Mammary epithelial cell (primary cell): ENCODE measurements at regions of chr12 and their contacts with region 1.

Region 1: DNA sequence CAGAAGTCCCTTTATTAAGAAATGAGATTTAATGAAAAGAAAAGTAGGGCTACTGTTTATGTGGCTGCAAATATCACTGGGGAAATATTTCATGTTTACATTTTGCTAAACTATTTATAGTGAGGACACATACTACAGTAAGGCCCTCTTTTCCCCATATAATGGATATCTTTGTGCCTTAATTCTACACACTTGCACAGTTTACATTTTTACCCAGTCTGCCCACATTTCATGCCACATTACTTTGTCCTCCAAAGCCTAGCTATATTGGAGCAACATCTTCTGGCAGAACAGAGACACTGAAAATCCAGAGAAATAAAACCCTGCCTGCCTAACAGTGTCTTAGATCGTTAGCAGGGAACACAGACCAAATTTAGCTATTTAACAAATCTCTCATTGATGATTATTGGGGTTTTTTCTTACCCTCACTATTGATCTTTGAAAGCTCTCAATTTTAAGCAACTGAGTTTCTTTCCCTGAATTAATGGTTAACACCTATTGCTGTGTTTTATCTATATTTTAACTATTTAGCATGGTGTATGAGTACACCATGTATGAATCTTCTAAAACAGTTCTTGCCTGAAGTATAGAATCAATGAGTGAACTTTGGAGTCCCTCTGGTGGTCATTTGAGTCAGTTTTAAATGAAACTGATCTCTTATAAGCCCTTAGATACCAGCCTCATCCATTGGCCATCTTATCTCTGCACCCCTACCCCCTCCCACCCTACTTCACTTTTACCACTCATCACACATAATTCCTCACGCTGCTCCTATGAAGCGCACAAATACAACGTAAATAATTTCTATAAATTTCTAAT is 170.2 kb downstream of the BCAT1 start:
- DNase-seq: peak; percentile 28
- H3K4me3 ChIP-seq: no peak overlapping the region
- H3K27ac ChIP-seq: no peak overlapping the region
- H3K4me1 ChIP-seq: no peaks in the 10 kb centered on the region
- H3K27me3 ChIP-seq: no peaks in the 10 kb centered on the region
- CTCF ChIP-seq: peak; percentile 41 to 48

Region 2: DNA sequence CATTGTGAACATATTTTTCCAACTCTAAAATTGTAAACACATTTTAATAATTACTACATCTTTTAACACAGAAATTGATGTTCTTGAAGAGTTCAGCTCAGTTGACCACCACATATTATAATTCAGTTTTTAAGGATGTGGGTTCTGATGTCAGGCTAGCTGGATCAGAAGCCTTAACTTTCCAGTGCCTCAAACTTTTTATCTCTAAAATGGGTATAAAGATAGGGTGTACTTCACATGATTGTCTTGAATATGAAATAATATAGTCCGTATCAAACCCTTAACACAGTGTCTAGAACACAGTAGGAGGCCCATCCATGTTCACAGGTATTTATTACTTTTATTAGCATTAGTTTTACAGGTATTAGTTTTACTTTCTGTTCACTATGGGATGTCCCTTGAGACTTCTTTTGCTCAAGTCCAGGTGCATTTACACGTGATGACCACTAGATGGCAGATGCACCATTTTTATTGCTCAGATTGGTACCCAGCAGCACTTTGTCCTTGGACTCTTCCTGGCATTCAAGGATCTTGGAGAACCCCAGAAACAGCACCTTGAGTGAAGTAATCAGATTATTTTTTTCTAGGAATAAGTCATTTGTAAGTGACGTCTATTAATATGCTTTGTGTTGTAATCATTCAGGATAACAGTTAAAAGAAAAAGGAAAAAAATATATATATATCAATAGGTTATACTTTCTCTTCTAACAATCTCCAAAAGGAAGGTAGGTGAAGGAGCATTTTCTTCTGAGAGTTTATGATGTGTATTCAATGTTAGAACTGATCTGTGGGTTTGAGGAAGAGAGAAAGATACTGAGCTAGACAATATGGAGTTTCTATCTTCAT is 1573.5 kb before region 1 on chr12:
- CTCF ChIA-PET with region 1: interaction called, 3 read pairs
- dilution Hi-C with region 1: no loop called
- in situ Hi-C with region 1: no loop called
- intact Hi-C with region 1: loop called (anchors 2 kb)
- DNase-seq: peak; percentile 37
- H3K4me3 ChIP-seq: no peak overlapping the region
- H3K27ac ChIP-seq: no peak overlapping the region
- H3K4me1 ChIP-seq: no peaks in the 10 kb centered on the region
- H3K27me3 ChIP-seq: no peaks in the 10 kb centered on the region
- CTCF ChIP-seq: peak; percentile 84 to 94

Region 3: GRCh38 chr12:24109381-24110039 is 669.2 kb before region 1 on chr12:
- CTCF ChIA-PET with region 1: no interaction called
- dilution Hi-C with region 1: no loop called
- in situ Hi-C with region 1: no loop called
- intact Hi-C with region 1: loop called (anchors 5 kb)
- DNase-seq: peak; percentile 7
- H3K4me3 ChIP-seq: no peak overlapping the region
- H3K27ac ChIP-seq: no peak overlapping the region
- H3K4me1 ChIP-seq: no peaks in the 10 kb centered on the region
- H3K27me3 ChIP-seq: no peaks in the 10 kb centered on the region
- CTCF ChIP-seq: peak; percentile 51 to 59

Region 4: GRCh38 chr12:24155042-24155441 is 623.7 kb before region 1 on chr12:
- CTCF ChIA-PET with region 1: no interaction called
- dilution Hi-C with region 1: no loop called
- in situ Hi-C with region 1: no loop called
- intact Hi-C with region 1: no loop called
- DNase-seq: no peak
- H3K4me3 ChIP-seq: no peak overlapping the region
- H3K27ac ChIP-seq: no peak overlapping the region
- H3K4me1 ChIP-seq: no peaks in the 10 kb centered on the region
- H3K27me3 ChIP-seq: no peaks in the 10 kb centered on the region
- CTCF ChIP-seq: no peak

Region 5: DNA sequence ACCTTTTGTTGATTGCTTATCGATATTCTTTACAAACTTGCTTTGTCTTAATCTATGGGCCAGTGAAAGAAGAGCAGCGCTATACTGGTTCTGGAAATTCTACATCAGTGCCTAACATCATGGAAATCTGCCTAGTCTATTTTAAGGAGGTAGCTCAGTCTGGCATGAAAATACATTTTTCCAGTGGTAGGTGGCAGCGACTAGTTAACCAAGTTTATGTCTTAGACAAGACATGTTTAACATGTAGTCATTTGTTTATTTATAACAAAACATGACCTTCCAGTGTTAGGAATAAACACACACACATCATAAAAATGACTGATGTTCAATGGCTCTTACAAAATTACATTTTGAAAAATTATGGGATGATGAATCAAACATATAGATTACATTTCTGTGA is 493.2 kb before region 1 on chr12:
- CTCF ChIA-PET with region 1: no interaction called
- dilution Hi-C with region 1: no loop called
- in situ Hi-C with region 1: no loop called
- intact Hi-C with region 1: loop called (anchors 5 kb)
- DNase-seq: no peak
- H3K4me3 ChIP-seq: no peak overlapping the region
- H3K27ac ChIP-seq: no peak overlapping the region
- H3K4me1 ChIP-seq: no peaks in the 10 kb centered on the region
- H3K27me3 ChIP-seq: no peaks in the 10 kb centered on the region
- CTCF ChIP-seq: no peak

Region 6: GRCh38 chr12:24584032-24584675 is 194.5 kb before region 1 on chr12:
- CTCF ChIA-PET with region 1: no interaction called
- dilution Hi-C with region 1: no loop called
- in situ Hi-C with region 1: no loop called
- intact Hi-C with region 1: no loop called
- DNase-seq: no peak
- H3K4me3 ChIP-seq: no peak overlapping the region
- H3K27ac ChIP-seq: no peak overlapping the region
- H3K4me1 ChIP-seq: no peaks in the 10 kb centered on the region
- H3K27me3 ChIP-seq: no peaks in the 10 kb centered on the region
- CTCF ChIP-seq: no peak

Region 7: GRCh38 chr12:24596768-24597388 is 181.8 kb before region 1 on chr12:
- CTCF ChIA-PET with region 1: no interaction called
- dilution Hi-C with region 1: no loop called
- in situ Hi-C with region 1: no loop called
- intact Hi-C with region 1: loop called (anchors 2 kb)
- DNase-seq: peak; percentile 20
- H3K4me3 ChIP-seq: no peak overlapping the region
- H3K27ac ChIP-seq: no peak overlapping the region
- H3K4me1 ChIP-seq: peaks cover 6% of the 10 kb centered on the region
- H3K27me3 ChIP-seq: no peaks in the 10 kb centered on the region
- CTCF ChIP-seq: peak; percentile 66 to 70

Region 8: GRCh38 chr12:24728366-24728765 is 50.3 kb before region 1 on chr12:
- CTCF ChIA-PET with region 1: no interaction called
- dilution Hi-C with region 1: no loop called
- in situ Hi-C with region 1: no loop called
- intact Hi-C with region 1: loop called (anchors 2 kb)
- DNase-seq: peak; percentile 14
- H3K4me3 ChIP-seq: no peak overlapping the region
- H3K27ac ChIP-seq: no peak overlapping the region
- H3K4me1 ChIP-seq: no peaks in the 10 kb centered on the region
- H3K27me3 ChIP-seq: no peaks in the 10 kb centered on the region
- CTCF ChIP-seq: peak; percentile 47 to 59

Region 9: GRCh38 chr12:24838531-24838950 is 59.8 kb after region 1 on chr12:
- CTCF ChIA-PET with region 1: interaction called, 5 read pairs
- dilution Hi-C with region 1: no loop called
- in situ Hi-C with region 1: no loop called
- intact Hi-C with region 1: loop called (anchors 1 kb)
- DNase-seq: peak; percentile 35
- H3K4me3 ChIP-seq: no peak overlapping the region
- H3K27ac ChIP-seq: no peak overlapping the region
- H3K4me1 ChIP-seq: no peaks in the 10 kb centered on the region
- H3K27me3 ChIP-seq: no peaks in the 10 kb centered on the region
- CTCF ChIP-seq: no peak